ENCODE measurements at regions of chr2 and their contacts with region 1.

Region 1: DNA sequence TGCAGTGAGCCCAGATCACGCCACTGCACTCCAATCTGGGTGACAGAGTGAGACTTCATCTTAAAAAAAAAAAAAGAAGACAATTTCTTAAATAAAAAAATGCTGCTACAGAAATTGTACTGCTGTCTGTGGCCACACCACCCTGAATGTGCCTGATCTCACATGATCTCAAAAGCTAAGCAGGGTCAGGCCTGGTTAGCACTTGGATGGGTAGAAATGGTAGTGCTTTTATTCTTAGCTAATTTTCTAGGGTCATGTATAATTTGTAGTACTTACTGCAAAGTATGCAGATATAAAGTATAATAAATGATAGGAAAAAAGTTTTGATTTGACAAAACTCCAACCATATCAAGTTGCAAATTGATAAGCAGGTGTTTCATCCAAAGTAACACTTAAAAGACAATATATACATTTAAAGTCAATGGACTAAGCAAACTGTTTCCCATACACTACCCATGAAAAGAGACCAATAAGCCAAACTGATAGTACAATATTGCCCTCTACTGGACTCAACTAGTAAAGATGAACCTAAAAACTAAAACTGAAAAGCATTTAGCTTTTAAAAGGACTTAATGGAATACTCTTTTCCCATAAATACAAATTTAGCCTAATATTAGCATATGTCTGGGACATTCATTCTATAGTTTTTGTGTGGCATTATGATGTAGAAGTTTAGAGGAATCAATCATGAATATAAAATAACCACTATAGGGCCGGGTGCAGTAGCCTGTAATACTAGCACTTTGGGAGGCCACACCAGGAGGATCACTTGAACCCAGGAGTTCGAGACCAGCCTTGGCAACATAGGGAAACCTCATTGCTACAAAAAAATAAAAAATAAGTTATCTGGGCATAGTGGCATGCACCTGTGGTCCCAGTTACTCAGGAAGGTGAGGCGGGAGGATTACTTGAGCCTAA is 18.6 kb upstream of the PEX13 start:
- DNase-seq: peak in 5 of 14 experiments; percentile 9 to 75 (median 71)
- ATAC-seq: peak; percentile 86
- H3K4me3 ChIP-seq: no peak overlapping the region
- H3K4me3 Mint-ChIP-seq: no peak overlapping the region
- H3K27ac ChIP-seq: no peak overlapping the region
- H3K27ac Mint-ChIP-seq: no peak overlapping the region
- H3K4me1 ChIP-seq: no peaks in the 10 kb centered on the region
- H3K4me1 Mint-ChIP-seq: no peaks in the 10 kb centered on the region
- H3K27me3 ChIP-seq: no peaks in the 10 kb centered on the region
- H3K27me3 Mint-ChIP-seq: no peaks in the 10 kb centered on the region
- CTCF ChIP-seq: peak; percentile 94

Region 2: GRCh38 chr2:60707750-60708371 is 291.0 kb before region 1 on chr2:
- CTCF ChIA-PET with region 1: interaction called, 15 read pairs
- POLR2A ChIA-PET with region 1: no interaction called
- intact Hi-C with region 1: loop called (anchors 1 kb)
- DNase-seq: peak in 3 of 14 experiments; percentile 49 to 62 (median 54)
- ATAC-seq: peak; percentile 59
- H3K4me3 ChIP-seq: no peak overlapping the region
- H3K4me3 Mint-ChIP-seq: no peak overlapping the region
- H3K27ac ChIP-seq: no peak overlapping the region
- H3K27ac Mint-ChIP-seq: no peak overlapping the region
- H3K4me1 ChIP-seq: no peaks in the 10 kb centered on the region
- H3K4me1 Mint-ChIP-seq: no peaks in the 10 kb centered on the region
- H3K27me3 ChIP-seq: no peaks in the 10 kb centered on the region
- H3K27me3 Mint-ChIP-seq: peaks cover 6% of the 10 kb centered on the region
- CTCF ChIP-seq: peak; percentile 80

Region 3: GRCh38 chr2:60794277-60794863 is 204.5 kb before region 1 on chr2:
- CTCF ChIA-PET with region 1: interaction called, 13 read pairs
- POLR2A ChIA-PET with region 1: no interaction called
- intact Hi-C with region 1: loop called (anchors 1 to 2 kb)
- DNase-seq: peak in 3 of 14 experiments; percentile 55 to 61 (median 58)
- ATAC-seq: peak; percentile 57
- H3K4me3 ChIP-seq: no peak overlapping the region
- H3K4me3 Mint-ChIP-seq: no peak overlapping the region
- H3K27ac ChIP-seq: no peak overlapping the region
- H3K27ac Mint-ChIP-seq: no peak overlapping the region
- H3K4me1 ChIP-seq: no peaks in the 10 kb centered on the region
- H3K4me1 Mint-ChIP-seq: peaks cover 7% of the 10 kb centered on the region
- H3K27me3 ChIP-seq: no peaks in the 10 kb centered on the region
- H3K27me3 Mint-ChIP-seq: no peaks in the 10 kb centered on the region
- CTCF ChIP-seq: peak; percentile 65

Region 4: DNA sequence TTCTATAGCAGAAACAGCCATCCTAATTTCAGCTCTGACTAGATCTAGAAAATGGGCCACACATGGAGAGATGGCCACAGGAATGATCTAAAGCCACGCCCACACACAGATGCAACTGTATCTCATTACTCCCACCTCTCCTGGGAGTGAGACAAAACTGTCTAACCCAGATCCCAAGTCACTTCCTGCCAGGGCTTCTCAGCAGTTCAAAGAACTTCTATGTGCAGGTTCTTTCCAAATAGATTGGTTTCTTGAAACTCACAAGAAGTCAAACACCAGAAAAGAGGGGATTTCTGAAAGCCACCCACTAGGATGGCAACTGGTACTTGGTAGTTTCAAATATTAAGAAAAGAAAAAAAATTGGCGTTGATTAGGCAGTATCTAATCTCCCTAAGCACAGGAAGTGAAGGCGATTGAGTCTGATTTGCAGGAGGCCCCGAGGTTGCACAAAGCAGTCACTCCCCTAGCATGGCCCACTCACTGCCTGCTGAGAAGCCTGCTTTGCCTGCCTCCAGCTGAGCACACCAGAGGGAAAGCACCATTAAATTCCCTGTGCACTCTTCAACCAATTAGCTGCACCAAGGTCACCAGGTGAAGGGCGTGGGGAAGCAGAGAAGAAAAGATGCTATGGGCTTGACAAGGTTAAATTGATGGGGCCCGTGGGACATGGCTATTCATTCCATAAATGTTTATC is 191.8 kb before region 1 on chr2:
- CTCF ChIA-PET with region 1: interaction called, 25 read pairs
- POLR2A ChIA-PET with region 1: interaction called, 7 read pairs
- intact Hi-C with region 1: loop called (anchors 1 to 2 kb)
- DNase-seq: peak in 6 of 14 experiments; percentile 4 to 73 (median 44)
- ATAC-seq: peak; percentile 77
- H3K4me3 ChIP-seq: no peak overlapping the region
- H3K4me3 Mint-ChIP-seq: peak overlapping the region; percentile 49
- H3K27ac ChIP-seq: peak overlapping the region in 1 of 2 donors; percentile 58
- H3K27ac Mint-ChIP-seq: peak overlapping the region; percentile 79
- H3K4me1 ChIP-seq: peaks cover 45% of the 10 kb centered on the region
- H3K4me1 Mint-ChIP-seq: peaks cover 51% of the 10 kb centered on the region
- H3K27me3 ChIP-seq: no peaks in the 10 kb centered on the region
- H3K27me3 Mint-ChIP-seq: no peaks in the 10 kb centered on the region
- CTCF ChIP-seq: no peak

Region 5: GRCh38 chr2:61995515-61995914 is 996.6 kb after region 1 on chr2:
- CTCF ChIA-PET with region 1: no interaction called
- POLR2A ChIA-PET with region 1: no interaction called
- intact Hi-C with region 1: no loop called
- DNase-seq: no peak
- ATAC-seq: no peak
- H3K4me3 ChIP-seq: no peak overlapping the region
- H3K4me3 Mint-ChIP-seq: no peak overlapping the region
- H3K27ac ChIP-seq: no peak overlapping the region
- H3K27ac Mint-ChIP-seq: no peak overlapping the region
- H3K4me1 ChIP-seq: no peaks in the 10 kb centered on the region
- H3K4me1 Mint-ChIP-seq: peaks cover 6% of the 10 kb centered on the region
- H3K27me3 ChIP-seq: no peaks in the 10 kb centered on the region
- H3K27me3 Mint-ChIP-seq: no peaks in the 10 kb centered on the region
- CTCF ChIP-seq: no peak

Measured in CD4-positive, alpha-beta T cell (primary cell).